ENCODE measurements at regions of chr1 and their contacts with region 1.

Region 1: DNA sequence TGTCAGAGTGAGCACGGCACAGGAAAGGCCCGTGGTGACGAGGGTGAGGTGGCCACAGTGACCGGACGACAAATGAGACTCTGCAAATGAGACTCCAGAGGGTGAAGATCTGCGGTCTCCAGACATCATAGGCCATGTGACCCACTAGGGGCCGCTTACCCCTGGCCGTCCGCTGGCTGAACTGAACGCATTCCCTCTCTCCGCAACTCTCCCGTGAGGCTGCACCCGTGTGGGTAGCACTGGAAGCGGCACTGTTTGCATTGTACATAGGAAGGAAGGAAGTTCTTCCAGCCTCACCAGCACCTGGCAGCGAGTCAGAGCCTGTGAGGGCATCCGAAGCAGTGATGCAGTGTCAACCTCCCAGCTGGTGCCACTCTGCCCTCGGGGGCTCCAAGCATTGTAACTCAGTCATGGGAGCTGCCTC is 23.6 kb upstream of the SPSB1 start:
- DNase-seq: no peak

Region 2: GRCh38 chr1:9038881-9039760 is 230.0 kb before region 1 on chr1:
- in situ Hi-C with region 1: no loop called
- DNase-seq: no peak

Region 3: DNA sequence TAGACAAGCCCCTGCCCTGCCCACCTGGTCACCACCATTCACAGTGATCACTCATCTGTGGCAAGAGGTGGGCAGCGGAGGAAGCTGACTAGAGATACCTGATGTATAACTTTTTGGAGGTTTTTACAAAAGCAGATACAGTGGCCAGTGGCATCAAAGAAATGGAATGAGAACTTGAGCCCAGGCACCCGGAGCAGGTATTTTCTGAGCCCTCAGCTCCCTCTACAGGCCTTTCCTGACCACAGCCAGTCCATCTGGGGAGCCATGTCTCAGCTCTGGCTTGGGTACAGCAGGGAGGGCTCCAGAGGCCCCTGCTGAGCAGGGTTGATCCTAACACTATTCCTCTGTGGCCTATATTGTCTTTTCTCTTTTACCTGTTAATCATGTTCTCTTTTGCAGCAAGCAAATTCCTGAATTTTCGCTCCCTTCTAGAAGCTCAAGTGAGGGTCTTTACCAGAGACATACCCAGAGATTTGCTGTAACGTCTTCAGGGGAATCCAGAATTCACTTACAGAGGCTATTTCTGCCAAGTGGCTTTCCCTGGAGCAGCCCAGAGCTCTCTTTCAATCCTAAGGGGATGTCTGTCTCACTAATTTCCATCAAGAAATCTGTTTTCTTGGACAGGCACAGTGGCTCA is 167.5 kb before region 1 on chr1:
- in situ Hi-C with region 1: no loop called
- DNase-seq: peak; percentile 67

Region 4: DNA sequence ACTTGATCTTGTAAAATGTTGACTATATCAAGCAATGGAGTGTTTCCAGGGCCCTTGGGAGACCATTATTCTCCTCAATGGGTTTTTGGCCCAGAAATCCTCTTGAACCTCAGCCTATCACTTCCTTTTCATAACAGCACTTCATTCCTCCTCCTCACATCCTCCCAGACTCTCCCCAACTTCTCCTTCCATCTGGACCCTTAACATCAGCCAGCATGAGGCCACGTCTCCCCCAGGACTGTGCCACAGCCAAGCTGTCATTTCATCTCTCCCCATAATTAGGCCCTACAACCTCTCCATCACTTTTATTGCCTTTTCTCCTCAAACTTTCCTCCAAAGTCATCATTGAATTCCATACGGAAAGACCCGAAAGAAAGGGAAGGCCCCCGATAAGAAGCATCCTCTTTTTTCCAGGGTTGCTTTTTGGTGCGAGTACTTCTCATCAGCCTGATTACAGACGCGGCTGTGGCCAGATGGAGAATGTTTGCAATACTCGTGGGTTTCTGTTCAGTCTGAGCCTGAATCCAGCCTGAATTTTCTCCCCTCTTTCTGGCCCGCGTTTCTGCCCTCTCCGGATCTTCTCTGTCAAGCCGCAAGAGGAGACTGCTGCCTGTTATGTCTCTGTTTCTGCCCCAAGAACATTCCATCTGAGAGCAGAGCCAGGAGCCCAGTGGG is 217.5 kb after region 1 on chr1:
- in situ Hi-C with region 1: loop called (anchors 10 kb)
- DNase-seq: no peak